ENCODE measurements at regions of chr4 and their contacts with region 1.

Region 1: DNA sequence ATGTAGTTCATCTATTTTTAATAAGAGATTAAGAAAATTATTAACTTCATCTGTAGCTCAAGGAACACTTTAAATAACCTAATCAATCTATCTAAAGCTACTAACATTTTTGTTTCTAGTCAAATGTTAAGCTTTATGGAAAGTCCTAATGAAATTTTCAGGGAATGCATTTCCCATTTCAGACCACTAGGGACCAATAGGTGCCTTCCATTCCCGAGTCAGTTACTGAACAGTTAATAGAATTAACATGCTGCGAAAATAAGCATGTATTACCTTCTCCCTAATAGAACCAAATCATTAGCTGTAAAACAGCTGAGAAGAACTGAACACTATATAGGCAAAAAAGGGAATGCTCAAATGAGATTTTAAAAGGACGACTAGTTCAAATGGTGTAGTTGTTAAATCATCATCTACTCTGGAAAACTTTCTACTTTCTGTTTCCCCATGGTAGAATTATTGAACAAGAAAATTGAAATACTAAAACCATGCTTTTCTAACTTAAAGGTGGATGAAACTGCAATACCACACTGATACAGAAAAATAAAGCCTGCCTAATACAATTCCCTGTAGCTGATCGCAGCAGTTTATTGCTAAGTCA is 22.5 kb downstream of the STX18 start:
- DNase-seq: peak; percentile 12
- ATAC-seq: peak; percentile 79
- H3K4me3 ChIP-seq: no peak overlapping the region
- H3K27ac ChIP-seq: no peak overlapping the region
- H3K4me1 ChIP-seq: peaks cover 0 to 4% of the 10 kb centered on the region in 2 experiments; a peak in 1 of 4 replicates
- H3K27me3 ChIP-seq: no peaks in the 10 kb centered on the region
- CTCF ChIP-seq: peak; percentile 18 to 76 (median 67); a peak in 4 of 6 replicates
- POLR2A ChIP-seq: no peak
- RAD21 ChIP-seq: peak; percentile 54

Region 2: DNA sequence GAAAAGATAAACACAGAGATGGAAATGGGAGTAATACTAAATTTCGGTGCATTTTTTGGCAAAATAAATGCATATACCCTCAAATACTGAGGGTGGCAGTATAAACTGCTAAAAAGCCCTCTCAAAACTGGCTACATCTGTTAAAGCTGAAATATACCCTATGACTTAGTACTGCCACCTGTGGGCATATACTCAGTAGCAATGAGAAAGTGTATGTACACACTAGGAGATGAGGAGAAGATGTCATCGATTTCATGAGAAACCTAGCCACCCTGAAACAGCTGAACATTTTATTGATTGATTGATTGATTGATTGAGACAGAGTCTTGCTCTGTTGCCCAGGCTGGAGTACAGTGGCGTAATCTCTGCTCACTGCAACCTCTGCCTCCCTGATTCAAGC is 259.1 kb before region 1 on chr4:
- CTCF ChIA-PET with region 1: no interaction called
- POLR2A ChIA-PET with region 1: no interaction called
- RAD21 ChIA-PET with region 1: no interaction called
- intact Hi-C with region 1: no loop called
- DNase-seq: peak; percentile 74
- ATAC-seq: peak; percentile 98
- H3K4me3 ChIP-seq: no peak overlapping the region
- H3K27ac ChIP-seq: no peak overlapping the region
- H3K4me1 ChIP-seq: no peaks in the 10 kb centered on the region
- H3K27me3 ChIP-seq: no peaks in the 10 kb centered on the region
- CTCF ChIP-seq: peak; percentile 52 to 96 (median 74)
- POLR2A ChIP-seq: no peak
- RAD21 ChIP-seq: peak; percentile 80

Region 3: GRCh38 chr4:4507923-4508322 is 11.5 kb before region 1 on chr4:
- CTCF ChIA-PET with region 1: interaction called, 16 read pairs
- POLR2A ChIA-PET with region 1: interaction called, 3 read pairs
- RAD21 ChIA-PET with region 1: no interaction called
- intact Hi-C with region 1: no loop called
- DNase-seq: peak; percentile 12
- ATAC-seq: peak; percentile 81
- H3K4me3 ChIP-seq: no peak overlapping the region
- H3K27ac ChIP-seq: no peak overlapping the region
- H3K4me1 ChIP-seq: no peaks in the 10 kb centered on the region
- H3K27me3 ChIP-seq: no peaks in the 10 kb centered on the region
- CTCF ChIP-seq: peak in 2 of 3 experiments; percentile 70 to 71; a peak in 4 of 6 replicates
- POLR2A ChIP-seq: no peak
- RAD21 ChIP-seq: peak; percentile 21; the same call in 1 of the 2 replicates